ENCODE measurements at regions of chr3 and their contacts with region 1.

Region 1: DNA sequence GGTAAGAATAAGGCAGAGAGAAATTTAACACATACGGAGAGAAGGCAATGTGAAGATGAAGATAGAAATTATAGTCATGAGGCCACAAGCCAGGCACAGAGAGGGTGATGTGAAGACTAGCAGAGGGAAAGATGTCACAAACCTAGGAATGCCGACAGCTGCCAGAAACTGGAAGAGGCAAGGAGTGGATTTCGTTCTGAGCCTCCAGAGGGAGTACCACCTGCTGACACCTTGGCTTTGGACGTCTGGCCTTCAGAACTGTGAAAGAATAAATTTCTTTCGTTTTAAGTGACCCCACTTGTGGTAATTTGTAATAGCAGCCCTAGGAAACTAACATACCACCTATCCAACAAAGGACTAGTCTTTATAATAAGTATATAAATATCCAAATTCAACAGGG is 5.0 kb upstream of the SGO1 start:
- DNase-seq: no peak
- ATAC-seq: no peak

Region 2: GRCh38 chr3:19885468-19885867 is 305.5 kb before region 1 on chr3:
- intact Hi-C with region 1: loop called (anchors 10 kb)
- DNase-seq: no peak
- ATAC-seq: peak; percentile 36